Thyroid gland (tissue), 4 donors: ENCODE measurements at regions of chr4 and their contacts with region 1.

Region 1: GRCh38 chr4:165537028-165537648 is 158.3 kb downstream of the CPE start:
- DNase-seq: peak in 1 of 2 donors; percentile 2
- H3K4me3 ChIP-seq: no peak overlapping the region
- H3K27ac ChIP-seq: no peak overlapping the region
- H3K4me1 ChIP-seq: no peaks in the 10 kb centered on the region
- H3K27me3 ChIP-seq: no peaks in the 10 kb centered on the region
- CTCF ChIP-seq: peak; percentile 48 to 82 (median 68)
- POLR2A ChIP-seq: no peak

Region 2: DNA sequence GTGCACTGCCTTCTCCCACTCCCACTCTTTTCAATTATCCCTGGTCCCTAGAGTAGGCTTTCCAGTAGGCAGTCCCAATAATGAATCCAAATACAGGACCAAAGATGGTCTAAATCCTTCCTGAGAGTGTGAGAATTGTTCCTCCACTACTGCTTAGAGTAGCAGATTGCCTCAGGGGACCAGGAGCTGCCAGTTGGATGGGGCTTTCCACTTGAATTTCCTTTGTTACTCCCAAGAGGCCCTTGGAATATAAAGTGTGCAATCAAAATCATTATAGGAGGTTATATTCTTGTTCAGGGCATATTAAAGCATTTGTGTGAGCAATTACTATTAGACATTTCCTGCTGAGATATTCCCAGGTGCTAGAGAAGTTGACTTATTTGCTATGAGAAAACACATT is 179.3 kb after region 1 on chr4:
- intact Hi-C with region 1: no loop called
- DNase-seq: no peak
- H3K4me3 ChIP-seq: no peak overlapping the region
- H3K27ac ChIP-seq: no peak overlapping the region
- H3K4me1 ChIP-seq: no peaks in the 10 kb centered on the region
- H3K27me3 ChIP-seq: no peaks in the 10 kb centered on the region
- CTCF ChIP-seq: no peak
- POLR2A ChIP-seq: no peak

Region 3: DNA sequence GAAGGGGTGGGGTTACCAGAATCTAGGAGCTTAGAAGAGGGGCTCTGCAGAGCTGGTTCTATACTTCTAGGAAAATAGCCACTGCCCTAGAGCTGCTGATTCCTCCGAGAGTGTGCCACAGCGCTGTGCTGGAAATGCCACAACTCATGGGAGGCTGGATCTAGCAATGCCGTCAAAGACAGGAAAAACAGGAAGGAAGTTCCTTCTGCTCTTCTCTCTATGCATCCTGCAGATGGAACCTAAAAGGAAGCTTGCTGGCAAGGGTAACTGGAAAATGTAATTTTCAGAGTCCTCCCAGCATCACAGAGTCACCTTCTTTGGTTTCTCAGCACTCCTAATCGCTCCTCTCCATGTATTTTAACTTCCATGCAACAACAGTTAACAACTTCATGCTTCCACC is 214.7 kb after region 1 on chr4:
- intact Hi-C with region 1: no loop called
- DNase-seq: no peak
- H3K4me3 ChIP-seq: no peak overlapping the region
- H3K27ac ChIP-seq: no peak overlapping the region
- H3K4me1 ChIP-seq: no peaks in the 10 kb centered on the region
- H3K27me3 ChIP-seq: no peaks in the 10 kb centered on the region
- CTCF ChIP-seq: no peak
- POLR2A ChIP-seq: no peak

Region 4: DNA sequence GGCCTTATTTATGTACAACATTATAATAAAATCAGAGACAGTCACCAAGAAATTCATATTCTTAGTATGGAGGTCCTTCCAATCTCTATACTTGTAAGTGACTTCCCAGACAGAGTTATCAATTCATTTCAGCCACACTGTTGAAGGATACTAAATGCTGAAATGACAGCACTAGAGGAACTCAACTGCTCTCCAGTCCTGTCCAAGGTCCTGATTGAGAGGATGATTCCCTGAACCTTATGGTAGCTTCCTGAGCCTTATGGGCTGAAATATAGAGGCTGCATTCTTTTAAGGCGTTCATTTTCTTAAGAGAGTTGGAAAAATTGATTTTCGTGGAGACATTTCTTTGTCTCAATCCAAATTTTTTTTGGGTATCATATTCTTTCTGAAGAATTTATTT is 541.8 kb after region 1 on chr4:
- intact Hi-C with region 1: loop called (anchors 5 kb)
- DNase-seq: no peak
- H3K4me3 ChIP-seq: no peak overlapping the region
- H3K27ac ChIP-seq: no peak overlapping the region
- H3K4me1 ChIP-seq: no peaks in the 10 kb centered on the region
- H3K27me3 ChIP-seq: no peaks in the 10 kb centered on the region
- CTCF ChIP-seq: no peak
- POLR2A ChIP-seq: no peak

Region 5: DNA sequence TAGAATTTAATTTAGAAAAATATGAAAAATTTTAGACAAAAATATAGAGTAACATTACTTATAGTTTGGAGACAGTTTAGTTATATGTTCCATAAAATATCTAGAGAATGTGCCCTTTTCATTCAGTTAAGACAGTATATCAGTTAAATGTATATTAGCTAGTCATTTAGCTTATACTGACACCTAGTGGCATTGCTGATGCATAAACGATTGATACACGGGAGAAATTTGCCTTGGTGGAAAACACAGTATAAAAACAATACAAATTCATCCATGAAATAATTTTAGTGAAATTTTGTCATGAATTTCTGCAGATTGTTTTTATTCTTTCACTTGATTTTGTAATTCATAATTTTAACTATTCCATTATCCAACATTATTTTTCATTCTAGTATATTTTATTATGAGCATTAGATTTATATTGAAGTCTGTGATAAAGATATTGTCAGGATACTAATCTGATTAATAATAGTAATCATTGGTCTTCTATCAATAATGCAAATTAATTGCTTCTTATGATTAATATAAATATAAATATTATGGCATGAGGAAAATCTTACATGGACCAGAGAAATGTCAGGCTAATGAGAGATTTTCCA is 554.9 kb after region 1 on chr4:
- intact Hi-C with region 1: loop called (anchors 5 kb)
- DNase-seq: no peak
- H3K4me3 ChIP-seq: no peak overlapping the region
- H3K27ac ChIP-seq: no peak overlapping the region
- H3K4me1 ChIP-seq: no peaks in the 10 kb centered on the region
- H3K27me3 ChIP-seq: no peaks in the 10 kb centered on the region
- CTCF ChIP-seq: peak; percentile 25 to 80 (median 59)
- POLR2A ChIP-seq: no peak